Activated naive CD4-positive, alpha-beta T cell treated with anti-CD3 and anti-CD28 coated beads for 36 hours (primary cell): ENCODE measurements at regions of chr12 and their contacts with region 1.

Region 1: DNA sequence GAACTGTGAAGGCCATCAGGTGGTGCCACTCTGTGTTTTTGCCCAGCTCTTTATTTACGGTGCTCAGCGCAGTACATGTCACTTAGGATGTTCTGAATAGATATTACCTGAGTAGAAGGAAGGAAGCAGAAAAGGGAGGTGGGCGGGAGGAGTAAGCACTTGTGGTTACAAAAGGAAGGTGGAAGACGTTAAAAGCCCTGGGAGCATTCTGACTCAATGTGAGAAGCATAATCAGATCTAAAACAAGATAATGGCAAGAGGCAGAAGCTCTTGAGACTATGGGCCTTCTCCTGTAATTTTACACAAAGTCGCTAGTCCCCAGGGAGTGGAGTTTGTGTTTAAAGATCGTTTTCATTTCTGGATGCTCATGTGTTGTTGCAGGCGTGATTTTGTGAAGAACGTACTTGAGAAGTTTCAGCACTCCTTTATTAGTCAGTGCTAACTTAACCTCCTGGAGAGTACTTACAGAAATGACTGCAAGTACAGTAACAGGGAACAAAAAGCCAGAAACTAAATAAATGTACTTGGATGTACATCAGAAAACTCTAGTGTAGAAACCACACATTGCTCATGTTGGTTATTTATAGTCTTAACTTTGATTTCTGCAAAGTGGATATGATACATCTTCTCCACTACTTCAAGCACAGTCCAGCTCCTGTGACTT is 1523.5 kb downstream of the AACS start:
- DNase-seq: peak; percentile 38
- H3K4me3 Mint-ChIP-seq: no peak overlapping the region
- H3K27ac Mint-ChIP-seq: peak overlapping the region; percentile 62
- H3K4me1 Mint-ChIP-seq: peaks cover 14% of the 10 kb centered on the region
- H3K27me3 Mint-ChIP-seq: no peaks in the 10 kb centered on the region

Region 2: GRCh38 chr12:126353604-126354003 is 235.1 kb before region 1 on chr12:
- CTCF ChIA-PET with region 1: no interaction called
- intact Hi-C with region 1: loop called (anchors 2 kb)
- DNase-seq: no peak
- H3K4me3 Mint-ChIP-seq: no peak overlapping the region
- H3K27ac Mint-ChIP-seq: no peak overlapping the region
- H3K4me1 Mint-ChIP-seq: peaks cover 8% of the 10 kb centered on the region
- H3K27me3 Mint-ChIP-seq: no peaks in the 10 kb centered on the region

Region 3: GRCh38 chr12:126362493-126362892 is 226.2 kb before region 1 on chr12:
- CTCF ChIA-PET with region 1: no interaction called
- intact Hi-C with region 1: loop called (anchors 2 kb)
- DNase-seq: no peak
- H3K4me3 Mint-ChIP-seq: no peak overlapping the region
- H3K27ac Mint-ChIP-seq: no peak overlapping the region
- H3K4me1 Mint-ChIP-seq: no peaks in the 10 kb centered on the region
- H3K27me3 Mint-ChIP-seq: no peaks in the 10 kb centered on the region

Region 4: GRCh38 chr12:126397071-126397581 is 191.6 kb before region 1 on chr12:
- CTCF ChIA-PET with region 1: no interaction called
- intact Hi-C with region 1: loop called (anchors 2 kb)
- DNase-seq: peak; percentile 22
- H3K4me3 Mint-ChIP-seq: no peak overlapping the region
- H3K27ac Mint-ChIP-seq: no peak overlapping the region
- H3K4me1 Mint-ChIP-seq: peaks cover 11% of the 10 kb centered on the region
- H3K27me3 Mint-ChIP-seq: no peaks in the 10 kb centered on the region

Region 5: GRCh38 chr12:126483145-126484068 is 105.3 kb before region 1 on chr12:
- CTCF ChIA-PET with region 1: no interaction called
- intact Hi-C with region 1: loop called (anchors 1 kb)
- DNase-seq: no peak
- H3K4me3 Mint-ChIP-seq: no peak overlapping the region
- H3K27ac Mint-ChIP-seq: no peak overlapping the region
- H3K4me1 Mint-ChIP-seq: peaks cover 6% of the 10 kb centered on the region
- H3K27me3 Mint-ChIP-seq: no peaks in the 10 kb centered on the region

Region 6: DNA sequence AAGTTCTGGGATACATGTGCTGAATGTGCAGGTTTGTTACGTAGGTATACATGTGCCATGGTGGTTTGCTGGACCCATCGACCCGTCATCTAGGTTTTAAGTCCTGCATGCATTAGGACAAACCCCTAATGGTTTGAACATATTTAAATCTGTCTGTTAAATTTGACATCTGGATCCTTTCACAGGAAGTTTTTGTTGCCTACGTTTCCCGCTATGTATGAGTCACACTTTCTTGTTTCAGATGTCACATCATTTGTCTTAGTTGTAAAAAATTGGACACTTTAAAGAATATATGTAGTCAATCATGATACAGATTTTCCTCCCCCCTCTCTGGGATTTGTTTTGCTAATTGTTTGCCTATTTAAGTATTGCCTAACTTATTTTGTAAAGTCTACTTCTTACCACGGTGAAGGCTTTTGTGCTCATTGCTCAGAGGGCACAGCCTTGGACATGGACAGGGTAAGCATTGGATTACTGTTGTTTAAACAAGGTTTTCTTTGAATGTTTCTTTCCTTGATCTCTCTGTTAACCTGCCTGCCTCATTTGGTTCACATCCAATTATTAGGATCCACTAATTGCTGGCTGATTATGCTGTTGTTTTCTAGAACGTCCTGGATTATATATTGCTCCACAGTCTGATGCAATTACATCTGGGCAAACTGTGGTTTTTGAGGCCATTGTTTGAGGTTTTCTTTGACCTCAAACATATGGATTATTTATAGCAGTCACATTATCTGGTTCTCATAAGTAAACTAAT is 82.1 kb before region 1 on chr12:
- CTCF ChIA-PET with region 1: no interaction called
- intact Hi-C with region 1: loop called (anchors 2 kb)
- DNase-seq: no peak
- H3K4me3 Mint-ChIP-seq: no peak overlapping the region
- H3K27ac Mint-ChIP-seq: no peak overlapping the region
- H3K4me1 Mint-ChIP-seq: no peaks in the 10 kb centered on the region
- H3K27me3 Mint-ChIP-seq: no peaks in the 10 kb centered on the region

Region 7: DNA sequence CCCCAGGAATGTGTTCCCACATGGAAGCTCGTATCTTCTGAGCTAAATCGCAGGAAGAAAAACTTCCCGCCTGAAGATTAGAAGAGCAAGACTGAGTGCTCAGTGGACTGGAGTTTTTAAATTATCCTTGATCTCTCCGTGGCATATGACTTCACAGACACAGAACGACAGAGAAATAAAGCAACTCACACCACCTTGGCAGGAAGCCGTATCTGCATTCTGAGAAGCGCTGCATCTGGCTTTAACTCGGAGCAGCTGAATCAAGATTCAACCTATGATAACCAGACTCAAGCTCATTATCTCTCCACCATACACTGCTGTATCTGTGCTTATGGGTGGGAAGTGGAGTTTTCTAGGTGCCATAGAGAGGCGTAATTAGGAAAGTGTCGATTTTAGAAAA is 40.8 kb before region 1 on chr12:
- CTCF ChIA-PET with region 1: no interaction called
- intact Hi-C with region 1: no loop called
- DNase-seq: no peak
- H3K4me3 Mint-ChIP-seq: no peak overlapping the region
- H3K27ac Mint-ChIP-seq: no peak overlapping the region
- H3K4me1 Mint-ChIP-seq: peaks cover 2% of the 10 kb centered on the region
- H3K27me3 Mint-ChIP-seq: no peaks in the 10 kb centered on the region